ENCODE measurements at regions of chr3 and their contacts with region 1.

Region 1: GRCh38 chr3:15427182-15427880 is at the starts of genes EAF1 and METTL6:
- DNase-seq: peak; percentile 65 to 71
- H3K4me3 ChIP-seq: peak within 1 kb of the TSS; percentile 96
- H3K27ac ChIP-seq: peak within 1 kb of the TSS; percentile 52
- H3K4me1 ChIP-seq: peaks cover 20% of the 10 kb centered on the region
- H3K27me3 ChIP-seq: no peaks in the 10 kb centered on the region
- CTCF ChIP-seq: no peak; the same call in 1 of the 2 replicates
- total RNA-seq, gene EAF1: 15.8 and 16.4 TPM in 2 replicates
- total RNA-seq, gene METTL6: 14.2 and 17.2 TPM in 2 replicates

Region 2: DNA sequence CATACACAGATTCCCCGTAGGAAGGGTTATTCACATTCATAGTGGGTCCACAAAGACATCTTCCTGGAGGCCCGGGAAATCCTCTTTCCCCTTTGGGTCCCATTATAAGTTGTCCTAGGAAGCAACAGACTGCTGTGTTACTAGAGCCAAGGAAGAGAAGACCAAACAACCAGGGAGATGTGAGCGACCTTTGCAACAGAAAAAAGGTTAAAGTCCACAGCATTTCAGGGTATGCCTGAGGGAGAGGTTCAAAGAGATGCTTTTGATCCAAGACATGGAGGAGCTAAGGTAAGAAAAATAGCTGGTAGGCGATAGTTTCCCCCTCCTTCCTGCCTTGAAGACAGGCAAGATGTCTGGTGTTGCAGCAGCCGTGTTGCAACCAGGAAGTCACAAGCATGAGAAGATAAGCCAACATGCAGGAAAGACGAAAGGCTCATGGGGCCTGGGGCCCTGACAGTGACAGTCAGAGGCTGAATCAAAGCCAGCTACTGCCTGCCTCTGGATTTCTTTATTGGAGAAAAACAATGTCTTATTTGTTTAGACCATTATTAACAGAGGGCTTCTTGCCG is 31.0 kb after region 1 on chr3:
- CTCF ChIA-PET with region 1: no interaction called
- POLR2A ChIA-PET with region 1: no interaction called
- intact Hi-C with region 1: no loop called
- DNase-seq: no peak
- H3K4me3 ChIP-seq: no peak overlapping the region
- H3K27ac ChIP-seq: no peak overlapping the region
- H3K4me1 ChIP-seq: no peaks in the 10 kb centered on the region
- H3K27me3 ChIP-seq: no peaks in the 10 kb centered on the region
- CTCF ChIP-seq: no peak

Region 3: DNA sequence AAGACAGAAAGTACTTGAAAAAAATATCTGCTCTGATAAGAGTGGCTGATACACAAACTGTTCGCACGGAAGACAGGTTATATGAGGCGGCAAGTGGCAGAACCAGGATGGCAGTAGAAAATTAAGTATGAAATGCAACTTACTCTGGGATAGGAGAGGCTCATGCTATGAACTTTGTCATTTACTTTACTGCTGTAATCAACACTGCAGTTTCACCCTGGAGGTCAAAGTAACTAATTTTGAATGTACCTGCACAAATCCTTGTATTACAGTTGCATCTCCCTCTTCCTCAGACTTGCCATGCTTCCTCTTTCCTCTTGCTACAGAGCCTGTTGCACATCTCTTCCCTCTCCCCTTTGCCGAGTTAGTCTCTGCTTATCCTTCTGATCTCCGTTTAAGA is 135.2 kb after region 1 on chr3:
- CTCF ChIA-PET with region 1: no interaction called
- POLR2A ChIA-PET with region 1: no interaction called
- intact Hi-C with region 1: loop called (anchors 5 kb)
- DNase-seq: no peak
- H3K4me3 ChIP-seq: no peak overlapping the region
- H3K27ac ChIP-seq: no peak overlapping the region
- H3K4me1 ChIP-seq: 0 out of 2 replicates have a peak, but pooled peaks cover 3% of the 10 kb centered on the region
- H3K27me3 ChIP-seq: no peaks in the 10 kb centered on the region
- CTCF ChIP-seq: no peak